Dendritic cell treated with granulocyte-macrophage colony-stimulating factor and Interleukin-4, amounts not matched to agents 40 ng/mL and 50 ng/mL, for 4 days (primary cell): ENCODE measurements at regions of chr4 and their contacts with region 1.

Region 1: DNA sequence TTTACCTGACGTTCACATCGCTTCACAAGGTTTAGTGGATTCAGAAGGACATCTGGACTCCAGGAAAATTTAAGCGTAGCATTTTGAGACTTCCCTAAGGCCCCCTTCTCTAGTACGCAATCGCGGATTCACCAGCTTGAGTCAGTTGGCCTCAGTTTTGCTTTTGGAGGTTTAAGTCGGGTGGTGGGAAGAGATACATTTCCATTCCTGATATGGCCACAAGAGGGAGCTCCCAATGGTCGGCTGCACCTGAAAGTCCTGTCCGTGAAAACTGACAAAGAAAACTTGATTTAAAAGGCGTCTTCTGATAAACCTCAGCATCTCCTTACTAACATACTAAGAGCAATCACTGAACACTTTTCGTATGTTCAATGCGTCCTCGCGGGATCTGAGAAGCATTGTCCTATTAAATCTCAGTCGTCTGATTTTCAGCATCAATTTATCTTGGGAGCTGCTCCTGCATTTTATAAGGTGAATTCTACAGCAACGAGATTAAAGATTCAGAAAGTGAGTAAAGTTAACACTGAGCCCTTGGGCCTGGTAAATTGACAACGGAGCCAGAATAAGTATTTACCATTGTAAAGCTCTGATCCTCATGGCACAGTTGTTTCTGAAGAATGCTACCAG is 50.6 kb downstream of the LGI2 start:
- H3K4me3 Mint-ChIP-seq: peak overlapping the region; percentile 40
- H3K27ac Mint-ChIP-seq: peak overlapping the region; percentile 83
- H3K4me1 Mint-ChIP-seq: peaks cover 41% of the 10 kb centered on the region
- H3K27me3 Mint-ChIP-seq: no peaks in the 10 kb centered on the region

Region 2: DNA sequence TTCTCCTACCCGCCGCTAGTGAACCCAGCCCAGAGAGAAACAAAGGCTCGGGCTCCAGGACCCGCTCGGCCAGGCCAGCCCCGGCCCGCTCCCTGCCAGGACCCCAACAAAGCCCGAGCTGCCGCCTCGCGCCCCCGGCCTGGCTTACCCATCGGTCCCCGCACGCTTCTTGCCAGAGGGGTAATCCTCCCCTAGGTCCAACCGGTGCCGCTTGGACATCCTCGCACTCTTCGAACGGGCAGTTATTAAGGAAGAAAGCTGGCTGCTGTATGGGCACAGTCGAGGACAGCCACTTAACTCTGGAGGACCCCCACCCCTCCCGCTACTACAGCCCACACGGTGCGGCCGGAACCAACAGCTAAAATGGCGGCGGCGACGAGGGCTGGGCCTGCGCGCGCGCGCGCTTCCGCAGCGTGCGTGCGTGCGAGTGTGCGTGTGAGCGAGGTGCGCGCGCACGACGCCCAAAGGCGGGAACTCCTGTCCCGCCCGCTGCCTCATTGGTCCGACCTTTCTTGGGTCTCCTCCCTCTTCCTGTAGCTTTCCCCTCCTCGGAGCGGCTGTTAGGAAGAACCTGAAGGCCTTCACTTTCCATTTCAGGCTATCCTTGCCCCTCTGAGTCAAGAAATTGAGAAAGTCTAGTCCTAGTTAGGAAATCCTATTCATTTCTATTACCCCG is 395.9 kb before region 1 on chr4 and contains the start of gene DHX15:
- intact Hi-C with region 1: loop called (anchors 5 kb)
- H3K4me3 Mint-ChIP-seq: peak within 1 kb of the TSS; percentile 100
- H3K27ac Mint-ChIP-seq: peak within 1 kb of the TSS; percentile 95
- H3K4me1 Mint-ChIP-seq: peaks cover 30% of the 10 kb centered on the region
- H3K27me3 Mint-ChIP-seq: no peaks in the 10 kb centered on the region

Region 3: DNA sequence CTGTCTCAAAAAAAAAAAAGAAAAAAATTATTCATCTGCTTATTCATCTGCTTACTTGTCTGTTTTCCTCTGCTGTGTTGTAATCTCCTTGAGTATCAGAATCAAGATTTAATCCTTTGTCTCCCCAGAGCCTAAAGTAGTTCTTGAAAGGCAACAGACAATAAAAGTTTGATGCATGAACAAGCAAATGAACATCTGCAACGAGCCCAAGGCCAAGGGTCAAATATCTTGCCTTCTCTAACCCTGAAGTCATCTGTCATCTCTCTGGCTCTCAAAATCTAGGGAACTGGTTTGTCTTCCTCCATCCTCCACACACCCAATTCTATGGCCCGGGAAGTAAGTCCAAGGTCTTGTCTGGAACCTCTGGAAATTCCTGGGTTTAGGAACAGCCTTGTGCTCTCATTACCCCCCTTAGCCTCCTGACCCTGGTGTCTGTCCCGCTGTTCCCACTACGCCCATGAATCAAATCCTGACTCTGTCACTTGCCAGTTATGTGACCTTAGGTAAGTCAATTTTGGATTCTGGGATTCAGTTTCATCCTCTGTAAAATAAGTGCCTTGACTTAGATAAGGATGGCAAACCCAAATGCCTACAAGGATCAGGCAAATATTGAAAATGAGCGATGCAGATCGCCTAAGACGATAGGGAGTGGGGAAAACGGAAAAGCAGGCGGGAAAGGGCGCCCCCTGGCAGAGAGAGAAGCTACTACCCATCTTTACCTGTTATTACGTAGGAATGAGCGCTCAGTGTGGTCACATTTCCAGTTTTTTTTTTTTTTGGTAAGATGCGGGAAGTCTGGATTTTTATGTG is 293.1 kb before region 1 on chr4:
- intact Hi-C with region 1: loop called (anchors 10 kb)
- H3K4me3 Mint-ChIP-seq: no peak overlapping the region
- H3K27ac Mint-ChIP-seq: no peak overlapping the region
- H3K4me1 Mint-ChIP-seq: peaks cover 7% of the 10 kb centered on the region
- H3K27me3 Mint-ChIP-seq: peaks cover 14% of the 10 kb centered on the region

Region 4: GRCh38 chr4:24794916-24795665 is 185.1 kb before region 1 on chr4 and contains the start of gene SOD3:
- intact Hi-C with region 1: loop called (anchors 10 kb)
- H3K4me3 Mint-ChIP-seq: peak within 1 kb of the TSS; percentile 24
- H3K27ac Mint-ChIP-seq: peak within 1 kb of the TSS; percentile 64
- H3K4me1 Mint-ChIP-seq: peaks cover 34% of the 10 kb centered on the region
- H3K27me3 Mint-ChIP-seq: peaks cover 45% of the 10 kb centered on the region

Region 5: GRCh38 chr4:24912252-24913118 is 67.7 kb before region 1 on chr4 and contains the start of gene CCDC149:
- intact Hi-C with region 1: loop called (anchors 2 kb)
- H3K4me3 Mint-ChIP-seq: peak within 1 kb of the TSS; percentile 74
- H3K27ac Mint-ChIP-seq: peak within 1 kb of the TSS; percentile 62
- H3K4me1 Mint-ChIP-seq: peaks cover 27% of the 10 kb centered on the region
- H3K27me3 Mint-ChIP-seq: peaks cover 6% of the 10 kb centered on the region